CD14-positive monocyte (primary cell): ENCODE measurements at regions of chrX and their contacts with region 1.

Region 1: GRCh38 chrX:149504915-149505651 is at the start of gene IDS:
- DNase-seq: peak; percentile 85 to 86 (median 85)
- H3K4me3 ChIP-seq: peak within 1 kb of the TSS; percentile 63 to 77 (median 76)
- H3K4me3 Mint-ChIP-seq: peak within 1 kb of the TSS; percentile 90 to 98
- H3K27ac ChIP-seq: peak within 1 kb of the TSS; percentile 93 to 94
- H3K27ac Mint-ChIP-seq: peak within 1 kb of the TSS; percentile 85 to 99 (median 97)
- H3K4me1 ChIP-seq: peaks cover 19 to 26% of the 10 kb centered on the region in 2 donors
- H3K4me1 Mint-ChIP-seq: peaks cover 16% of the 10 kb centered on the region
- H3K27me3 ChIP-seq: no peaks in the 10 kb centered on the region
- H3K27me3 Mint-ChIP-seq: peaks cover 0 to 5% (median 0%) of the 10 kb centered on the region in 3 donors
- CTCF ChIP-seq: no peak
- polyA plus RNA-seq, gene IDS: 79.5 to 113 (median 94.3) TPM

Region 2: DNA sequence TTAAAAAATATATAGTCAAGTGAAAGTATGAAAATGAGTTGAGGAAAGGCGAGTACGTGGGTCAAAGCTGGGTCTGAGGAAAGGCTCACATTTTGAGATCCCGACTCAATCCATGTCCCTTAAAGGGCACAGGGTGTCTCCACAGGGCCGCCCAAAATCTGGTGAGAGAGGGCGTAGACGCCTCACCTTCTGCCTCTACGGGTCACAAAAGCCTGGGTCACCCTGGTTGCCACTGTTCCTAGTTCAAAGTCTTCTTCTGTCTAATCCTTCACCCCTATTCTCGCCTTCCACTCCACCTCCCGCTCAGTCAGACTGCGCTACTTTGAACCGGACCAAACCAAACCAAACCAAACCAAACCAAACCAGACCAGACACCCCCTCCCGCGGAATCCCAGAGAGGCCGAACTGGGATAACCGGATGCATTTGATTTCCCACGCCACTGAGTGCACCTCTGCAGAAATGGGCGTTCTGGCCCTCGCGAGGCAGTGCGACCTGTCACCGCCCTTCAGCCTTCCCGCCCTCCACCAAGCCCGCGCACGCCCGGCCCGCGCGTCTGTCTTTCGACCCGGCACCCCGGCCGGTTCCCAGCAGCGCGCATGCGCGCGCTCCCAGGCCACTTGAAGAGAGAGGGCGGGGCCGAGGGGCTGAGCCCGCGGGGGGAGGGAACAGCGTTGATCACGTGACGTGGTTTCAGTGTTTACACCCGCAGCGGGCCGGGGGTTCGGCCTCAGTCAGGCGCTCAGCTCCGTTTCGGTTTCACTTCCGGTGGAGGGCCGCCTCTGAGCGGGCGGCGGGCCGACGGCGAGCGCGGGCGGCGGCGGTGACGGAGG is 1593.7 kb before region 1 on chrX and contains the start of gene FMR1:
- intact Hi-C with region 1: loop called in 1 of 2 experiments (anchors 10 kb)
- DNase-seq: peak; percentile 94 to 95 (median 94)
- H3K4me3 ChIP-seq: peak within 1 kb of the TSS; percentile 68 to 87 (median 80)
- H3K4me3 Mint-ChIP-seq: peak within 1 kb of the TSS; percentile 97 to 98
- H3K27ac ChIP-seq: peak within 1 kb of the TSS; percentile 85 to 88
- H3K27ac Mint-ChIP-seq: peak within 1 kb of the TSS; percentile 90 to 98 (median 95)
- H3K4me1 ChIP-seq: peaks cover 14 to 21% of the 10 kb centered on the region in 2 donors
- H3K4me1 Mint-ChIP-seq: peaks cover 25% of the 10 kb centered on the region
- H3K27me3 ChIP-seq: no peaks in the 10 kb centered on the region
- H3K27me3 Mint-ChIP-seq: peaks cover 0 to 6% (median 1%) of the 10 kb centered on the region in 3 donors
- CTCF ChIP-seq: no peak
- polyA plus RNA-seq, gene FMR1: 3.7 to 31.8 (median 5.1) TPM

Region 3: GRCh38 chrX:149259241-149259640 is 245.8 kb before region 1 on chrX:
- intact Hi-C with region 1: no loop called
- DNase-seq: no peak
- H3K4me3 ChIP-seq: no peak overlapping the region
- H3K4me3 Mint-ChIP-seq: no peak overlapping the region
- H3K27ac ChIP-seq: no peak overlapping the region
- H3K27ac Mint-ChIP-seq: no peak overlapping the region
- H3K4me1 ChIP-seq: no peaks in the 10 kb centered on the region
- H3K4me1 Mint-ChIP-seq: no peaks in the 10 kb centered on the region
- H3K27me3 ChIP-seq: no peaks in the 10 kb centered on the region
- H3K27me3 Mint-ChIP-seq: peaks cover 0 to 3% (median 1%) of the 10 kb centered on the region in 3 donors
- CTCF ChIP-seq: no peak

Region 4: DNA sequence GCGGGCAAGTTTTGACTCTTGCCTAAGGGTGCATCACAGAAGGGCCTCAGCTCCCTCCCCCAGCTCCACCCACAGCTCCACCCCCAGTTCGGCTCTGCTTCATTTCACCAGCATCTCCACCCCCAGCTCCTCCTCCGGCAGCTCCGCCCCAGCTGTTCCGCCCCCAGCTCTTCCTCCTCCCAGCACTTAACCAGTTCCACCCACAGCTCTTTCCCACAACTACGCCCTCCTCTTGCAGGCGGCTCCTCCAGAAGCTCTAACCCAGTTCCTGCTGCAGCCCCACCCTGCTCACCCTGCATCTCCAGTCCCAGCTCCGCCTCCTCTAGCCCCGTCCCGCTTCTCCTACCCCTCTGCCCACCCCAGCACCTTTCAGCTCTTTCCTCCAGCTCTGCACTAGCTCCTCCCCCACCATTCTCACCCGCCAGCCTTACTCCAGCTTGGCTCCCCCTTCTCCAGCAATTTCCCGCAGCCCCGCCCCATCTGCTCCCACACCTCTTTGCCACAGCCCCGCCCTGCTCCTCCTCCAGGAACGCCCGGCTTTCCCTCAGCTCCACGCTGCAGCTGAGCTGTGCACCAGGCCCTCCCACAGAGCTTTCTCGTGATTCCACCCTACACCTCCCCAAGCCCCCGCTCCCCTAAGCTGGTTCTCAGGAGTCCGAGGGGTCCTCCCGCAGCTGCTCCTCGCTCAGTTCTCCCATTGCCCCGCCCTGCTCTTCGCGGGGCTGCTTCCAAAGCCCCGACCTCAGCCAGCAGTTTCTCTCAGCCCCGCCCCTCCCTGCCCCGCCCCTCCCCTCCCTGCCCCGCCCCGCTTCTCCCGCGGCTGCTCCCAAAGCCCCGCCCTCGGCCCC is 34.4 kb after region 1 on chrX:
- intact Hi-C with region 1: no loop called
- DNase-seq: peak; percentile 82 to 95 (median 90)
- H3K4me3 ChIP-seq: peak overlapping the region; percentile 47 to 81 (median 66)
- H3K4me3 Mint-ChIP-seq: peak overlapping the region; percentile 82 to 87
- H3K27ac ChIP-seq: peak overlapping the region; percentile 74 to 79
- H3K27ac Mint-ChIP-seq: peak overlapping the region; percentile 87 to 99 (median 95)
- H3K4me1 ChIP-seq: peaks cover 11 to 25% of the 10 kb centered on the region in 2 donors
- H3K4me1 Mint-ChIP-seq: peaks cover 22% of the 10 kb centered on the region
- H3K27me3 ChIP-seq: no peaks in the 10 kb centered on the region
- H3K27me3 Mint-ChIP-seq: peaks cover 0 to 6% (median 0%) of the 10 kb centered on the region in 3 donors
- CTCF ChIP-seq: no peak

Region 5: GRCh38 chrX:149570672-149571071 is 65.6 kb after region 1 on chrX:
- intact Hi-C with region 1: no loop called
- DNase-seq: no peak
- H3K4me3 ChIP-seq: no peak overlapping the region
- H3K4me3 Mint-ChIP-seq: no peak overlapping the region
- H3K27ac ChIP-seq: no peak overlapping the region
- H3K27ac Mint-ChIP-seq: no peak overlapping the region
- H3K4me1 ChIP-seq: no peaks in the 10 kb centered on the region
- H3K4me1 Mint-ChIP-seq: no peaks in the 10 kb centered on the region
- H3K27me3 ChIP-seq: no peaks in the 10 kb centered on the region
- H3K27me3 Mint-ChIP-seq: peaks cover 0 to 1% (median 0%) of the 10 kb centered on the region in 3 donors
- CTCF ChIP-seq: no peak